ENCODE measurements at regions of chr12 and their contacts with region 1.

Region 1: DNA sequence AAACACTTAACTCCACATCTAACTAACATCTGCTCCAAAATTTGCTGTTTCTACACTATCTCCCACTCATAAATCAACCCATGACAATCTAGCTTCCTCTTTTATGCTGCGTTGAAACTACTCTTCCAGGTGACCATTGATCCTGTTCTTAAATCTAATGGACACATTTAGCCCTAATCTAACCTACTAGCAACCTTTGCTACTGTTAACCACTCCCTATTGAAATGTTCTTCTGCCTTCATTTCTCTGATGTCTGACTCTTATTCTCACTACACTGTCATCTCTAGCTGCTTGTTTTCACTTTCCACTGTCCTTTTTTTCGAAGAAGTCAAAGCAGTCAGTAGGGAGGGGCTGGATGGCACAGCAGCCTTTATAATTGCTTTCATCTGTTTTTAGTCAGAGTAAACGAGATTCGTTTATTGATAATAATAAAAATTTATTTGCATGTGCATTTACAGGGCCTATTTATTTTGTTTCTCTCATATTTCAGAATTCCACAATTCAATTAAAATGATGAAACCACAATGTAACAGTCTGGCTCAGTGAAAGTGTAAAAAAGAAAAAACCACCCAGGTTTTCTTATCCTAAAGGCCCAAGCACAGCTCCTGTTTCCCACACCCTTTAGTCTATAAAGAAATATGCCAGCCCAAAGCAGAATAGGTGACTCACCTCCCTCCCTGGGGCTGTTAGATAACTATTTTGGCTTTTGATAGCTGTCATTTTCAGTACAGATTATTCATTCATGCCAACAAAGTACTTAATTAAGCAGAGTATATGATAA is 44.9 kb downstream of the ATP2B1 start:
- DNase-seq: peak; percentile 24
- H3K4me3 Mint-ChIP-seq: no peak overlapping the region
- H3K27ac Mint-ChIP-seq: no peak overlapping the region
- H3K4me1 Mint-ChIP-seq: peaks cover 67% of the 10 kb centered on the region
- H3K27me3 Mint-ChIP-seq: no peaks in the 10 kb centered on the region

Region 2: GRCh38 chr12:89597770-89598169 is 66.0 kb before region 1 on chr12:
- CTCF ChIA-PET with region 1: no interaction called
- POLR2A ChIA-PET with region 1: no interaction called
- intact Hi-C with region 1: loop called (anchors 5 kb)
- DNase-seq: no peak
- H3K4me3 Mint-ChIP-seq: no peak overlapping the region
- H3K27ac Mint-ChIP-seq: peak overlapping the region; percentile 33
- H3K4me1 Mint-ChIP-seq: peaks cover 24% of the 10 kb centered on the region
- H3K27me3 Mint-ChIP-seq: no peaks in the 10 kb centered on the region

Region 3: DNA sequence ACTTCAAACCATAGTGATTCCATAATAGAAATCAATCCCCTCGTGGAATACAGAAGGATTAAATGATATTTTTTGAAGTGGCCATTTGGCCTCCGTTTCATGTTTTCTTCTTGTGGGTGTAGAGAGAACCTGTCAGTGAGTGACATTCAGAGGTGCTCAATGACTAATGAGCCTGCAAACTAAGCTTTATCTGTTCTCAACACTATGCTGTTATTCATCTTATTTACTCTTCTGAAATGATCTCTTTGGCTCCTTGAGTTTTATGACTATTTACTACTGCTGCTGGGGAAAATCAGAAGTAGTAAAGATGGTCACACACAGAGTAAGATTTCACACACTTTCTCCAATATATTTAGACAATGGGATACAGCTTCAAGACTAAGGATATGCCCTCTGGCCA is 14.5 kb after region 1 on chr12:
- CTCF ChIA-PET with region 1: interaction called, 3 read pairs
- POLR2A ChIA-PET with region 1: interaction called, 3 read pairs
- intact Hi-C with region 1: loop called (anchors 2 kb)
- DNase-seq: no peak
- H3K4me3 Mint-ChIP-seq: no peak overlapping the region
- H3K27ac Mint-ChIP-seq: no peak overlapping the region
- H3K4me1 Mint-ChIP-seq: peaks cover 60% of the 10 kb centered on the region
- H3K27me3 Mint-ChIP-seq: no peaks in the 10 kb centered on the region

Region 4: DNA sequence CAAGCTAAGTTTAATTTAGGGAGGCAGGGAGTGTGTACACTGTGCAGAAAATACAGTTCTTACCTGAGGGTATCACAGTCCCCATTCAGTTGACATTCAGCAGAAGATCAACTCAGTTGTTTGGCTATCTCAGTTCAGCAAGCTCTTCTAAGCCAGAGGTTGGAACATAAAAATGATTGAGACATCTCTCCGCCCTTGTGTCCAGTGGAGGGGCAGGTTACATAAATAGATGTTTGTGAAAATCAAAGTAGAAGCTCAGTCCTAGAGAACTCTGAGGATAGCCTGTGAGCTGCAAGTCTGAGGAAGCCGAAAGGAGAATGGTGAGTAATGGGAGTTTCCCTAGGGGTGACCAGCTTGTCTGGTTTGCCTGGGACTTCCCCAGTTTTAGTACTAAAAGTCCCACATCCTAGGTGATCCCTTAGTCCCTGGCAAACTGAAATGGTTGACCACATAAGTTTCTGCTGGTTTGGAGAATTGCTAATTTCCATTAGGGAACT is 296.3 kb after region 1 on chr12:
- CTCF ChIA-PET with region 1: no interaction called
- POLR2A ChIA-PET with region 1: no interaction called
- intact Hi-C with region 1: loop called (anchors 5 kb)
- DNase-seq: peak; percentile 57
- H3K4me3 Mint-ChIP-seq: no peak overlapping the region
- H3K27ac Mint-ChIP-seq: no peak overlapping the region
- H3K4me1 Mint-ChIP-seq: peaks cover 14% of the 10 kb centered on the region
- H3K27me3 Mint-ChIP-seq: no peaks in the 10 kb centered on the region

Region 5: DNA sequence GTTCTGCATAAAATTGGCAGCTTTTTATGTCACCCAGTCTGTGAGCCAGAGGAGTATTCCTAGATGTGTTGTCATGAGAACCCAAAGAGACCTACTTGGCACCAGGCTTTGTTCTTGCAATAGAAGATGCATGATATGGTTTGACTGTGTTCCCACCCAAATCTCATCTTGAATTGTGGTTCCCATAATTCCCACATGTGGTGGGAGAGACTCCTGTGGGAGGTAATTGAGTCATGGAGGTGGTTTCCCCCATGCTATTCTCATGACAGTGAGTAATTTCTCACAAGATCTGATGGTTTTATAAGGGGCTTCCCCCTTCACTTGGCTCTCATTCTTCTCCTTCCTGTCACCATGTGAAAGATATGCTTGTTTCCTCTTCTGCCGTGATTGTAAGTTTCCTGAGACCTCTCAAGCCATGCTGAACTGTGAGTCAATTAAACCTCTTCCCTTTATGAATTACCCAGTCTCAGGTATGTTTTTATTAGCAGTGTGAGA is 616.8 kb after region 1 on chr12:
- CTCF ChIA-PET with region 1: no interaction called
- POLR2A ChIA-PET with region 1: no interaction called
- intact Hi-C with region 1: loop called (anchors 2 kb)
- DNase-seq: peak; percentile 37
- H3K4me3 Mint-ChIP-seq: no peak overlapping the region
- H3K27ac Mint-ChIP-seq: peak overlapping the region; percentile 13
- H3K4me1 Mint-ChIP-seq: peaks cover 16% of the 10 kb centered on the region
- H3K27me3 Mint-ChIP-seq: peaks cover 5% of the 10 kb centered on the region

Measured in activated CD4-positive, alpha-beta memory T cell treated with anti-CD3 and anti-CD28 coated beads for 36 hours (primary cell).